Mammary epithelial cell (primary cell): ENCODE measurements at regions of chr4 and their contacts with region 1.

Region 1: GRCh38 chr4:126495163-126495752 is 1137.5 kb upstream of the INTU start:
- DNase-seq: no peak
- H3K4me3 ChIP-seq: no peak overlapping the region
- H3K27ac ChIP-seq: no peak overlapping the region
- H3K4me1 ChIP-seq: no peaks in the 10 kb centered on the region
- H3K27me3 ChIP-seq: no peaks in the 10 kb centered on the region
- CTCF ChIP-seq: no peak

Region 2: GRCh38 chr4:126395664-126396063 is 99.6 kb before region 1 on chr4:
- CTCF ChIA-PET with region 1: no interaction called
- dilution Hi-C with region 1: no loop called
- in situ Hi-C with region 1: no loop called
- intact Hi-C with region 1: no loop called
- DNase-seq: peak; percentile 55
- H3K4me3 ChIP-seq: no peak overlapping the region
- H3K27ac ChIP-seq: no peak overlapping the region
- H3K4me1 ChIP-seq: no peaks in the 10 kb centered on the region
- H3K27me3 ChIP-seq: peaks cover 4% of the 10 kb centered on the region
- CTCF ChIP-seq: no peak

Region 3: GRCh38 chr4:126427781-126428585 is 67.3 kb before region 1 on chr4:
- CTCF ChIA-PET with region 1: no interaction called
- dilution Hi-C with region 1: loop called (anchors 5 kb)
- in situ Hi-C with region 1: no loop called
- intact Hi-C with region 1: no loop called
- DNase-seq: no peak
- H3K4me3 ChIP-seq: no peak overlapping the region
- H3K27ac ChIP-seq: no peak overlapping the region
- H3K4me1 ChIP-seq: no peaks in the 10 kb centered on the region
- H3K27me3 ChIP-seq: no peaks in the 10 kb centered on the region
- CTCF ChIP-seq: no peak